ENCODE measurements at regions of chr17 and their contacts with region 1.

Region 1: GRCh38 chr17:48472411-48473281 is 42.6 kb upstream of the SKAP1 start:
- DNase-seq: no peak
- ATAC-seq: peak; percentile 43
- H3K4me3 Mint-ChIP-seq: no peak overlapping the region
- H3K27ac Mint-ChIP-seq: no peak overlapping the region
- H3K4me1 Mint-ChIP-seq: peaks cover 29% of the 10 kb centered on the region
- H3K27me3 Mint-ChIP-seq: peaks cover 8% of the 10 kb centered on the region; the same call in 1 of the 2 replicates
- CTCF ChIP-seq: no peak

Region 2: GRCh38 chr17:48457080-48457836 is 15.4 kb before region 1 on chr17:
- CTCF ChIA-PET with region 1: interaction called, 11 read pairs
- POLR2A ChIA-PET with region 1: interaction called, 4 read pairs
- DNase-seq: peak; percentile 72
- ATAC-seq: peak; percentile 94
- H3K4me3 Mint-ChIP-seq: peak overlapping the region; percentile 64
- H3K27ac Mint-ChIP-seq: no peak overlapping the region
- H3K4me1 Mint-ChIP-seq: peaks cover 24% of the 10 kb centered on the region
- H3K27me3 Mint-ChIP-seq: peaks cover 66% of the 10 kb centered on the region
- CTCF ChIP-seq: peak; percentile 99